Right ventricle myocardium inferior (tissue), 1 donor: ENCODE measurements at regions of chr6 and their contacts with region 1.

Region 1: GRCh38 chr6:168035661-168036545 is 38.4 kb downstream of the KIF25 start:
- DNase-seq: peak; percentile 46
- ATAC-seq: peak; percentile 27

Region 2: DNA sequence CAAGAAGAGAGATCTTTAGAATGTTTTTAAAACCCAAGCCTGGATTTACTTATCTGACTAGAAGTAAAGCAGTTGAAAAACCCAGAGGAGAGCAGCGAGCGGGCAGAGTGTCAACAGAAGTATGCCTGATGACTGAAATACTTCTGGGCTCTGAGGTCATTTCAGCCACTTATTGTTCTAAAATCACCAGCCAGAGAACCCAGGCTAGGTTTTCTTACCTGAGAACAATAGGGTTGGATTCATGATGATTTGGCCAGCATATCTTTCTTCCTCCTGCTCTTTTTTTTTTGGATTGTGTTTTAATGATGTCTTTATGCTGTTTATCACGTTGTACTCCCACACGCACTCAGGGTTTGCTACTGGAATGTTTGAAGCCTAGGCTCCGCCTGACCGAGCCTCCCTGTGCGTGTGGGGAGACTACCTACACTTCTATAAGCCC is 101.5 kb before region 1 on chr6:
- intact Hi-C with region 1: loop called (anchors 2 kb)
- DNase-seq: no peak
- ATAC-seq: no peak

Region 3: GRCh38 chr6:167968091-167968490 is 67.8 kb before region 1 on chr6:
- intact Hi-C with region 1: loop called (anchors 5 kb)
- DNase-seq: no peak
- ATAC-seq: no peak

Region 4: DNA sequence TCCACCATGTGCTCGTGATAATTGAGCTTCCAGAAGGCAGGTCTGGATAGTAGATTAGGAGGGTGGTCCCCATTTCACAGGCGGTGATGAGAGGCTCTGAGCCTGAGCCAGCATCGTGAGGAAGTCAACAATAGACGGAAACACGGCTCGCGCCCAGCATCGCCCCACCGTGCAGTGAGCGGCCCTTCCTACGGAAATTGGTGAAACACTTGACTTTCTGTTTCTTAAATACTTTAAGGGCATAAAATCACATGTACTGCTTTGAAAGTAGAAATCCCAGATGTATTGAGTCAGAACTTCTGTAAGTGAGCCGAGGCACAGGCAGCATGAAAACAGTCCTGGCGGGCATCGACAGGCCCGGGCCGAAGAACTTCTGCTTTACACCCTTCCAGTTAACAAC is 42.7 kb before region 1 on chr6:
- intact Hi-C with region 1: loop called (anchors 2 kb)
- DNase-seq: no peak
- ATAC-seq: peak; percentile 56

Region 5: DNA sequence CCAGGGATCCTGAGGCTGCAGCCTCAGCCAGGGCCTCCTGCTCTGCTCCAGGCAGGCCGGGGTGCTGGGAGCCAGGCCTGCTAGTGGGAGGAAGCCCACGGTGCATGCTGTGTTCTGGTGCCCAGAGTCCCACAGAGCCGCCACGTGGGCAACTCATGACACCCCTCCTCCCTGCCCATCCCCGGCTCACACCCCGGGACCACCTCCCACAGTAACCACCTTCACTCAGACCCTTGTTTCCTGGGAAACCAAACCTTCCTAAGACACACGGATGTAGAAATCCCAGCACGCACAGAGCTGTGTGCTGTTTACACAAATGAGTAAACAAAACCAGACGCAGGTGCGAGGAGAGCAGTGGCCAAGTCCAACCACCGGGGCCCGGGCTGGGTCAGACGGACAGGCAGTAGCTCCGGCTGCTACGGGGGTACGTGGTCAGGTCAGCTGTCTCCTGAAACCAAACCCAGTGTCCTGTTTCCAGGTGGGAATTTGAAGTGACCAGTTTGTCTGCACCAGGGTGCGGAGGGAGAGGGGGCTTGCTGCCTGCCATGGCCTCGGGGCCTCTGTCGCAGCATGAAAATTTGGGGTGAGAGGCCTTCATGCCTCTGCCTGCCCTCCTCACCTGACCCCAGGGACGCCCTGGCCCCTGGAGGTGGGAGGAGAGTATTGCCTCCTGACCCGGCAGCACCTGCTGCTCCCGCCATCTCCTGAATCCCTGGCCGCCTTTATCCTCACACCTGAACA is 352.9 kb after region 1 on chr6:
- intact Hi-C with region 1: no loop called
- DNase-seq: no peak
- ATAC-seq: no peak